ENCODE measurements at regions of chr19 and their contacts with region 1.

Region 1: GRCh38 chr19:4909897-4910593 is 744 bp downstream of the UHRF1 start:
- DNase-seq: peak; percentile 99
- H3K4me3 ChIP-seq: peak overlapping the region; percentile 62
- H3K27ac ChIP-seq: peak overlapping the region; percentile 91
- H3K4me1 ChIP-seq: peaks cover 34% of the 10 kb centered on the region
- H3K27me3 ChIP-seq: no peaks in the 10 kb centered on the region
- CTCF ChIP-seq: no peak

Region 2: DNA sequence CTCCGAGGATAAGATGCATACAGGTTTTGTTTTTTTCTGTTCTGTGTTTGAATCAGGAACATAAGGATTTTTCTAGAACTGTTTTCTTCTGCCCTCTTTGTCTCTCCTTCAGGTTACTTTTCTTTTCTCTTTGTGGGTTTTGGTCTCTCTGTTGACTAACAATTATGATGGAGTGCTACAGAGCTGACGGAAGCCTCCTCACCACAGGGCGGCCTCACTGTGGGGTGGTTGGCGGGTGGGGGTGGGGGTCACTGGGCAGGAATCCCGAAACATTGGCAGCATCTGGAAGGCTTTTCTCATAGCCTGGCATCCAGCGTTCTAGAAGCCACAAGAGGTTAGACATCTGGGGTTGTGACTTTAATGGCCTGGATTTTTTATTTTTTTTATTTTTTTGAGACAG is 1111.9 kb before region 1 on chr19:
- CTCF ChIA-PET with region 1: interaction called, 10 read pairs
- POLR2A ChIA-PET with region 1: no interaction called
- intact Hi-C with region 1: no loop called
- DNase-seq: no peak
- H3K4me3 ChIP-seq: no peak overlapping the region
- H3K27ac ChIP-seq: no peak overlapping the region
- H3K4me1 ChIP-seq: peaks cover 6% of the 10 kb centered on the region
- H3K27me3 ChIP-seq: peaks cover 18% of the 10 kb centered on the region
- CTCF ChIP-seq: no peak

Region 3: DNA sequence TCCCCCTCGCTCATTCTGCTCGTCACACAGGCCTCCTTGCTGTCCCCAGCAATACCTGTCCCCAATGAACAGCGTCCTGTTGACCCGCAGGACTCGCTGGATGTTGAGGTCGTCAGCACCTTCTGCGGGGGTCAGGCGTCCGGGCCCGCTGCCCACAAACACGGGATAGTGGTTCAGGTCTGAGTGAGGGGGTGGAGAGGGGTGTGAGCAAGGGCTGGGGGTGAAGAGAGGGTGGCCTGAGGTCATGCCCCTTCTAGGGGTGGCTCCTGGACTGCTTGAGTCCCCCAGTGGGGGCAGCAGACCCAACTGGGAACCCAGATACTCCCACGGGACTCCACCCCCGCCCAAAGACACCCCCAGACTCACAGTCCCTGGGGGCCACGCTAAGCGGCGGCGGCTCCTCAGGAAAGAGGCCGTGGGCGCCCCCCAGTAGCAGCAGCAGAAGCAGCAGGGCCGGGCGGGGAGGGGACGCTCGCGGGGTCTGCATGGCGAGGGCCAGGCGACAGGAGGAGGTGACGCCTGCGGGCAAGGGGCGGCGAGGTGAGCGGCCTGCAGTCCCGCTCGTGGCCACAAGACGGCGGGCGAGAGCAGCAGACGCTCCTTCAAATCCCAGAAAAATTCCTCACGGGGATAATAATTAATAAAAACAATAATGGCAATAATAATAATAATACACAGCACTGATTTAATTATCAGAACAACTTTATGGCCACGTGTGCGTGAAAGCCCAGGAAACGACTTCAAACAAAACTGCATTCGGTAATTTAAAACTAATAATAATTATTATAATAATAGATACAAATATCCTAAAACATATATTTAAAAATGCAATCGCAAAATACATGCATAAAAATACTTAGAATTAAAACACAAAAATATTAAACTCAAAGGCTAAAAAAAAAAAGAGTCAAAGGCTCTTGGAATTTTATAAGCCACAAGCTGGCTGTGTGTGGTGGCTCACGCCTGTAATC is 351.8 kb before region 1 on chr19:
- CTCF ChIA-PET with region 1: no interaction called
- POLR2A ChIA-PET with region 1: no interaction called
- intact Hi-C with region 1: no loop called
- DNase-seq: peak; percentile 39
- H3K4me3 ChIP-seq: peak overlapping the region; percentile 19
- H3K27ac ChIP-seq: no peak overlapping the region
- H3K4me1 ChIP-seq: no peaks in the 10 kb centered on the region
- H3K27me3 ChIP-seq: no peaks in the 10 kb centered on the region
- CTCF ChIP-seq: peak; percentile 93

Region 4: DNA sequence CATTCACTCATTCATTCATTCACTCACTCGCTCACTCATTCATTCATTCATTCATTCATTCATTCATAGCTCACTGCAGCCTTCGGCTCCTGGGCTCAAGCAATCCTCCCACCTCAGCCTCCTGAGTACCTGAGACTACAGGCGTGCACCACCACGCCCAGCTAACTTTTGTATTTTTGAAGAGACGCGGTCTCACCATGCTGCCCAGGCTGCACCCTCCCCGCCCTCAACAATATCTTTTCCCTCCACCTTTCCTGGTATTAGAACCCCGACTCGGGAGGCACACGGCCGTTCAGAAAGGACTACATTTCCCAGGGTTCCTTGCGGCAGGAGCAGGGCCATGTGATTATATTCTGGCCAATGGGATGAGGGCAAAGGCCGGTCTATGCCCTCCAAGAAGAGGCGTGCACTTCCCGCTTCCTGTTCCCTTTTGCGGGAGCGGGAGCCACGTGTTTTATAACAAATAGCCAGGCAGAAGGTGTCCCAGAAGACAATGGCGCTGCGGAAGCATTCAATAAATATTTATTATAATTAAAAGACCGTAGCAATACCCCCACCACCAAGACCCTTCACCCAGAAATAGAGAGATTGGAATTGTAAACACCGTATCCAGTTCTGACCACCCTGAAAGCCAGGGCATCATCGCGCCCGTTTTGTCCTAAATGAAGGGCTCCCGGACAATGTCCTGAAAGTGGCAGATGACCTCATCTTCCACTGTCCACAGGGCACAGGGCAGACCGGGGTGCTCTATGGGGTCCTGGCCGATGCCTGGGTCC is 94.4 kb before region 1 on chr19:
- CTCF ChIA-PET with region 1: interaction called, 25 read pairs
- POLR2A ChIA-PET with region 1: interaction called, 3 read pairs
- intact Hi-C with region 1: loop called (anchors 2 kb)
- DNase-seq: peak; percentile 97
- H3K4me3 ChIP-seq: no peak overlapping the region
- H3K27ac ChIP-seq: no peak overlapping the region
- H3K4me1 ChIP-seq: peaks cover 5% of the 10 kb centered on the region
- H3K27me3 ChIP-seq: no peaks in the 10 kb centered on the region
- CTCF ChIP-seq: no peak

Region 5: GRCh38 chr19:4877753-4878490 is 32.1 kb before region 1 on chr19:
- CTCF ChIA-PET with region 1: interaction called, 13 read pairs
- POLR2A ChIA-PET with region 1: interaction called, 7 read pairs
- intact Hi-C with region 1: loop called (anchors 2 kb)
- DNase-seq: no peak
- H3K4me3 ChIP-seq: no peak overlapping the region
- H3K27ac ChIP-seq: no peak overlapping the region
- H3K4me1 ChIP-seq: no peaks in the 10 kb centered on the region
- H3K27me3 ChIP-seq: no peaks in the 10 kb centered on the region
- CTCF ChIP-seq: no peak

Region 6: GRCh38 chr19:4889034-4889815 is 20.8 kb before region 1 on chr19:
- CTCF ChIA-PET with region 1: interaction called, 15 read pairs
- POLR2A ChIA-PET with region 1: no interaction called
- intact Hi-C with region 1: no loop called
- DNase-seq: no peak
- H3K4me3 ChIP-seq: no peak overlapping the region
- H3K27ac ChIP-seq: no peak overlapping the region
- H3K4me1 ChIP-seq: no peaks in the 10 kb centered on the region
- H3K27me3 ChIP-seq: no peaks in the 10 kb centered on the region
- CTCF ChIP-seq: no peak

Region 7: GRCh38 chr19:5074407-5074806 is 164.4 kb after region 1 on chr19:
- CTCF ChIA-PET with region 1: no interaction called
- POLR2A ChIA-PET with region 1: no interaction called
- intact Hi-C with region 1: no loop called
- DNase-seq: peak; percentile 59
- H3K4me3 ChIP-seq: no peak overlapping the region
- H3K27ac ChIP-seq: no peak overlapping the region
- H3K4me1 ChIP-seq: peaks cover 39% of the 10 kb centered on the region
- H3K27me3 ChIP-seq: no peaks in the 10 kb centered on the region
- CTCF ChIP-seq: no peak

Region 8: DNA sequence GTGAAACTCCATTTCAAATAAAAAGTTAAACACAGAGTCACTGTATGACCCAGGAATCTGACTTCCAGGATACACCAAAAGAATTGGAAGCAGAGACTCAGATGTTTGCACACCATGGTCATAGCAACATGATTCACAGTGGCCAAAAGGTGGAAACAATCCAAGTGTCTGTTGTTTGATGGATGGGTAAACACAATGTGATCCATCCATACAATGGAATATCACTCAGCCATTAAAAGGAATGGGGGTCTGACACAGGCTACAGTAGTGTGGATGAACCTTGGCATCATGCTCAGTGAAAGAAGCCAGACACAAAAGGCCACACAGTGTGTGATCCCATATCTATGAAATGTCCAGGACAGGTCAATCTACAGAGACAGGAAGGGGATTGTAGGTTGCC is 256.2 kb after region 1 on chr19:
- CTCF ChIA-PET with region 1: no interaction called
- POLR2A ChIA-PET with region 1: no interaction called
- intact Hi-C with region 1: no loop called
- DNase-seq: no peak
- H3K4me3 ChIP-seq: no peak overlapping the region
- H3K27ac ChIP-seq: no peak overlapping the region
- H3K4me1 ChIP-seq: no peaks in the 10 kb centered on the region
- H3K27me3 ChIP-seq: no peaks in the 10 kb centered on the region
- CTCF ChIP-seq: no peak

Measured in A673 (cell line).